Panc1 (cell line): ENCODE measurements at regions of chr1 and their contacts with region 1.

Region 1: GRCh38 chr1:196309386-196309785 is 298.9 kb downstream of the KCNT2 start:
- DNase-seq: peak; percentile 10
- ATAC-seq: no peak
- H3K4me3 ChIP-seq: no peak overlapping the region
- H3K27ac ChIP-seq: no peak overlapping the region
- H3K4me1 ChIP-seq: no peaks in the 10 kb centered on the region
- H3K27me3 ChIP-seq: no peaks in the 10 kb centered on the region
- CTCF ChIP-seq: peak; percentile 8; the same call in 1 of the 2 replicates

Region 2: DNA sequence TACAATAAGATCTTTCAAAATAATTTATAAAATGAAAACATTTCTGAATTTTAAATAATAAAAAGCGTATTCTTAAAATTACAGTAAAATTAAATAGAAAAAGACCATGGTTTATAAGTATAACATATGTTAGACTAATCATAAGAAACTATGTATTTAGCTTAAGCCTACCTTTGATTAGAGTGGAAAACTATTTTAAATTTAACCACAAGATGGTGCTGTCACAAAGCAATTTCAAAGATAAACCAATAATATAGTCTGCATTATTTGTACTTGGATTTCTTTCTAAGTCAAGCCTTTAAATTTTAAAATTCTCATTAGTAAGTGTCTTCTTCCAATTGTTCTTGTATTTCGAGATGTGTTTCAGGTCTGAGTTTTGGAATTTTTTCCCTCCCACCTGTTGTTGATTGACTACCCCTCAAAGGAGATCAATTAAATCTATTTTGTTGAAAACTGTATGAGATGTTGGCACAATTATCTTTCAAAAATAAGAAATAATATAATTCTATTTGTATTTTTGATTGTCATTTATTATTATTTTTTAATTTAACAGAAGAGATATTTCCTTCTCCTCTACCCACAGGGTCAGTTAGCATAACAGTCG is 160.9 kb before region 1 on chr1:
- CTCF ChIA-PET with region 1: no interaction called
- POLR2A ChIA-PET with region 1: no interaction called
- in situ Hi-C with region 1: no loop called
- intact Hi-C with region 1: loop called (anchors 2 kb)
- DNase-seq: peak; percentile 25
- ATAC-seq: peak; percentile 68; the same call in 1 of the 2 replicates
- H3K4me3 ChIP-seq: no peak overlapping the region
- H3K27ac ChIP-seq: no peak overlapping the region
- H3K4me1 ChIP-seq: no peaks in the 10 kb centered on the region
- H3K27me3 ChIP-seq: no peaks in the 10 kb centered on the region
- CTCF ChIP-seq: peak; percentile 50; the same call in 1 of the 2 replicates

Region 3: DNA sequence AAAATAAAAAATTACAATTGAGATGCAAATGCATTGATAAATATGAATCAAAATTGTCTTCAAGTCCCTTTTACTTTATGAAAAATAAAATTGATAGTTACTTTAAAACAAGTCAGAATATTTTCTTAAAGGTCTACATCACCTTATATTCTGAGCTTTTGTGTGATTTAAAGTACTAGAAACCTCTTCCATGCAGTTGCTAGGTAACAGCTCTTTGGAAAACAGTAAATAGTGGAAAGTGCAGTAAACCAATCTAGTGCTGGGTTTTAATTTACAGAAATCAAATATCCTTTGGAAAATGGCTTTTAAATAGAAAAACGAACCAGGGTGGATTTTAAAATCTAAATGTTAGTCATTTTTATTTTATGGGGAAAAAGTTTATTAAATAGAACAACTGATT is 70.9 kb after region 1 on chr1:
- CTCF ChIA-PET with region 1: no interaction called
- POLR2A ChIA-PET with region 1: no interaction called
- in situ Hi-C with region 1: no loop called
- intact Hi-C with region 1: no loop called
- DNase-seq: no peak
- ATAC-seq: no peak
- H3K4me3 ChIP-seq: no peak overlapping the region
- H3K27ac ChIP-seq: no peak overlapping the region
- H3K4me1 ChIP-seq: no peaks in the 10 kb centered on the region
- H3K27me3 ChIP-seq: no peaks in the 10 kb centered on the region
- CTCF ChIP-seq: no peak